ENCODE measurements at regions of chr12 and their contacts with region 1.

Region 1: DNA sequence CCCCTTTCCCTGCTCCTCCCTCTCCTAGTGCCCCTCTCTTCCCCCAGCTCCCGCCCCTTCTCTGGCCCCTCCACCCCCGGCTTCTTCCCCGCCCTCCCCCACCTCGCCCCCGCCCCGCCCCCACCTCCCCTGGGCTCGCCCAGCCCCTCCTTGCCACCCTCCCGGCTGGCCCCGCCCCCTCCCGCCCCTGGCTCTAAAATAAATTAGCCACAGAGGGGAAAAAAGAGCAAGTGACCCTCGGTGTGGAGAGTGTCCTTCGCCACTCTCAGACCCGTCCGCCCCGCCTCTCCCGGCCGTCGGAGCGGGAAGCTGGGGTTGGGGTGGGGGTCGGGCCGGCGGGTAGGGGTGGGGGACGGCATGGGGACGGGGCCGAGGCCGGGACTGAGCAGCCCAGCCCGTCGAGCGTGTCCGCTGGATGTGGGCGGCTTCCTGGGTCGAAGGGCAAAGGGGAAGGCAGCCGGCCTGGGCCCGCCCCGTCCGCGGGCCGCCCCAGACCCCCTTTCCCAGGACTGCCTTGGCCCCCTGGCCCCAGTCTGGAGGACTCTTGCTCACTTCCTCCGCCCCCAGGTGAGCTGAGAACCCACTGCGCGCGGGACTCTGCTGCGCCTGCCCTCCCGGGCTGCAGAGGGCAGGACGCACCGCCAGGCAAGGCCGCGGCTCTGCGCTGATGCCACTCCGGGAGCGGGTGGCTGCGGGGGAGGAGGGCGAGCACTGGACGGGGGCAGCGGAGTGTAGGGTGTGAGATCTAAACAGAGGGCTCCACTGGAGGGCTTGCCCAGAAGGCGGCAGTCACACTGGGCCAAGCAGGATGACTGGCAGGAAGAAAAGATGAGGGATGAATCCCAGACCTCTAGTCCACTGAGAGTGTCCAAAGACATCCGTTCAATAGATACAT is 570 bp upstream of the FIGNL2 start:
- DNase-seq: no peak
- H3K4me3 ChIP-seq: no peak overlapping the region
- H3K27ac ChIP-seq: no peak overlapping the region
- H3K4me1 ChIP-seq: peaks cover 0 to 55% (median 42%) of the 10 kb centered on the region in 4 experiments
- H3K27me3 ChIP-seq: peaks cover 0 to 31% (median 9%) of the 10 kb centered on the region in 5 experiments

Region 2: GRCh38 chr12:51823875-51824565 is 25.1 kb before region 1 on chr12:
- CTCF ChIA-PET with region 1: interaction called, 13 read pairs
- POLR2A ChIA-PET with region 1: interaction called, 5 read pairs
- DNase-seq: peak; percentile 61 to 70 (median 66)
- H3K4me3 ChIP-seq: no peak overlapping the region
- H3K27ac ChIP-seq: no peak overlapping the region
- H3K4me1 ChIP-seq: peaks cover 4 to 50% (median 49%) of the 10 kb centered on the region in 4 experiments
- H3K27me3 ChIP-seq: no peaks in the 10 kb centered on the region

Region 3: GRCh38 chr12:51905471-51906429 is 56.7 kb after region 1 on chr12:
- CTCF ChIA-PET with region 1: no interaction called
- POLR2A ChIA-PET with region 1: no interaction called
- DNase-seq: peak in 2 of 3 donors; percentile 25 to 42
- H3K4me3 ChIP-seq: no peak overlapping the region
- H3K27ac ChIP-seq: peak overlapping the region in 1 of 2 experiments; percentile 59
- H3K4me1 ChIP-seq: peaks cover under 1 to 17% (median 13%) of the 10 kb centered on the region in 4 experiments
- H3K27me3 ChIP-seq: peaks cover 0 to 33% (median 6%) of the 10 kb centered on the region in 5 experiments